ENCODE measurements at regions of chr12 and their contacts with region 1.

Region 1: GRCh38 chr12:39103552-39104165 is 198.3 kb upstream of the CPNE8 start:
- DNase-seq: peak; percentile 90
- ATAC-seq: peak; percentile 90
- H3K4me3 ChIP-seq: no peak overlapping the region
- H3K27ac ChIP-seq: peak overlapping the region; percentile 71; the same call in 1 of the 2 replicates
- H3K4me1 ChIP-seq: peaks cover 19% of the 10 kb centered on the region
- H3K27me3 ChIP-seq: no peaks in the 10 kb centered on the region
- CTCF ChIP-seq: peak; percentile 85

Region 2: DNA sequence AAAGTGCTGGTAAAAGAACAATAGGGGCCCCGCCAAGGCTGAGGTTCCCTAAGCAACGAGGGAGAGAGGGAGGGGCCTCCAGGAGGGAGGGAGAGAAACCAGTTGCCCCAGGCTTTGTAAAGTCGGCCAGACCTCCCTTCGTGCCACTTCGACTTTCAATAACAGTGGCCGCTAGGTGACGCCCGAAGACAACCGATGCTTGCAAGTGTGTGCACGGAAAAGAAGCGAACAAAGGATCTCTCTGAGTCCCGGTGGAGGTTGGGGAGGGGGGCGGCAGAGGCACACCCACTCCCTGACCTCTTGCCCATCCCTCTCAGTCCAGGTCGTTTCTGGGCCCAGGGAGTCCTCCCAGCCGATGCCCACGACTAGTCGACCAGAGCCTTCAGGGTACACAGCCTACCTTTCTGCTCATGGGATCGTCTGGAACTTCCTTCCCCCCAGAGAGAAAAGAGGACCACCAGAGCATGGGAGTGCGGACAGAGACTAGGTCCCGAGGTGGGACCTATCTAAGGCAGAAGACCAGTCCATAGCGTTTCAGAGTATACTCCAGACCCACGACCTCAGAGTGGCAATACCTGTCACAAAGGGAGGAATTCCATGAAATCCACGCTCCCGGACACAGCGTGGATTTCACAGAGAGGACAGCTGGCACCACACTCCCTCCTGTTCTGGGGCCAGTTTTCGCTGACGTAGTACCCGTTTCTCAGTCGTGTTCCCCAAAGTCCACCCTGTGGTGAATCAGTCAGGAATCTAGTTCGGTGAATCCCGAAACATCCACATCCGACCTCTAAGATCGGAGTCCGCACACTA is 1049.8 kb before region 1 on chr12:
- CTCF ChIA-PET with region 1: no interaction called
- POLR2A ChIA-PET with region 1: no interaction called
- intact Hi-C with region 1: loop called (anchors 10 kb)
- DNase-seq: peak; percentile 97
- ATAC-seq: peak; percentile 45
- H3K4me3 ChIP-seq: peak overlapping the region; percentile 61
- H3K27ac ChIP-seq: no peak overlapping the region
- H3K4me1 ChIP-seq: peaks cover 28% of the 10 kb centered on the region
- H3K27me3 ChIP-seq: no peaks in the 10 kb centered on the region
- CTCF ChIP-seq: peak; percentile 93

Region 3: GRCh38 chr12:38332814-38333213 is 770.8 kb before region 1 on chr12:
- CTCF ChIA-PET with region 1: interaction called, 3 read pairs
- POLR2A ChIA-PET with region 1: no interaction called
- intact Hi-C with region 1: loop called (anchors 1 kb)
- DNase-seq: no peak
- ATAC-seq: no peak
- H3K4me3 ChIP-seq: no peak overlapping the region
- H3K27ac ChIP-seq: no peak overlapping the region
- H3K4me1 ChIP-seq: 0 out of 2 replicates have a peak, but pooled peaks cover 3% of the 10 kb centered on the region
- H3K27me3 ChIP-seq: no peaks in the 10 kb centered on the region
- CTCF ChIP-seq: no peak

Region 4: GRCh38 chr12:38664661-38665269 is 438.9 kb before region 1 on chr12:
- CTCF ChIA-PET with region 1: interaction called, 4 read pairs
- POLR2A ChIA-PET with region 1: no interaction called
- intact Hi-C with region 1: loop called (anchors 10 kb)
- DNase-seq: peak; percentile 65
- ATAC-seq: peak; percentile 87
- H3K4me3 ChIP-seq: no peak overlapping the region
- H3K27ac ChIP-seq: no peak overlapping the region
- H3K4me1 ChIP-seq: no peaks in the 10 kb centered on the region
- H3K27me3 ChIP-seq: no peaks in the 10 kb centered on the region
- CTCF ChIP-seq: peak; percentile 87

Region 5: GRCh38 chr12:38921025-38921677 is 182.5 kb before region 1 on chr12:
- CTCF ChIA-PET with region 1: interaction called, 85 read pairs
- POLR2A ChIA-PET with region 1: no interaction called
- intact Hi-C with region 1: loop called (anchors 1 kb)
- DNase-seq: peak; percentile 92
- ATAC-seq: peak; percentile 96
- H3K4me3 ChIP-seq: no peak overlapping the region
- H3K27ac ChIP-seq: no peak overlapping the region
- H3K4me1 ChIP-seq: peaks cover 11% of the 10 kb centered on the region
- H3K27me3 ChIP-seq: no peaks in the 10 kb centered on the region
- CTCF ChIP-seq: peak; percentile 85

Measured in PC-3 (cell line).